Common myeloid progenitor, CD34-positive (primary cell): ENCODE measurements at regions of chr10 and their contacts with region 1.

Region 1: DNA sequence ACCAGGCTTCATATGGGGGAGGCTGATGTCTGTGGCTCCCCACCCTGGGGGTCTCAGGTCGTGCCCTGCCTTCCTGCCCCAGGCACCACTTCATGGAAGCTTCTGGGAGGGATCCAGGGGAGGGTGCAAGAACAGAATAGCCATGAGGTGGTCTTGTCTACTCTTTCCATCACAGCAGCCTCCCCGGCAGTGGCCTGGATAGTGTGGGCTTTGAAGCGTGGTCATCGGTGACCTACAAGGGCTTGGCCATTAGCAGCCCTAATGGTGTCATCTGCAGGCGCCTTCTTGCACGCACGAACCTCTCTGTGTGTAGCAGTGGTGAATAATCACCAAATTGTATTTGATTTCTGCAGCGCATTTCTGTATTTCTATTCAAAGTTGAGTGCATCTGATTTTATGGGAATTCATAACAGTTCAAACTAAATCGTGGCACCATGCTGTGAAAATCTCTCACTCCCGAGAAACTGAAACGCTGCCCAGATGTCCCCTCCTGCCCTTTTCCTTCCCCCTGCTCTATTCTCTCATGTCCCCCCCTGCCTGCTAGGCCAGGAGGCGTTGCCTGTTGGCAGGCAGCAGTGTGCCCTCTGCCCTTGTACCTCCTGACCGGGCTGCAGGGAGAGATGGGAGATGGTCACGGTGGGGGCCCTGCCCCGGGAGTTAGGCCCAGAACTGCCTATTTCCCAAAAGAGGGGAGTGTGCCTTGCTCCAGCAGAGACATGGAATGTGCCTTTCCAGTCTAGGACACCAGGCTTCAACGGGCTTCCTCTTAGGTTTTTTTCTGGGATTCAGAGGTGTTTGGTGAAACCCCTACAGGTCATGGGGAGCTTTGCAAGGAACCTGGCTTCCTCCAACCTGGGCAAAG is 34.8 kb downstream of the CDH23 start:
- DNase-seq: no peak
- H3K4me3 ChIP-seq: no peak overlapping the region
- H3K27ac ChIP-seq: no peak overlapping the region
- H3K4me1 ChIP-seq: no peaks in the 10 kb centered on the region
- H3K27me3 ChIP-seq: no peaks in the 10 kb centered on the region

Region 2: GRCh38 chr10:71419750-71420149 is 11.7 kb before region 1 on chr10:
- CTCF ChIA-PET with region 1: interaction called, 15 read pairs
- POLR2A ChIA-PET with region 1: no interaction called
- DNase-seq: no peak
- H3K4me3 ChIP-seq: no peak overlapping the region
- H3K27ac ChIP-seq: no peak overlapping the region
- H3K4me1 ChIP-seq: no peaks in the 10 kb centered on the region
- H3K27me3 ChIP-seq: peaks cover 0 to 7% (median 0%) of the 10 kb centered on the region in 5 experiments